ENCODE measurements at regions of chr5 and their contacts with region 1.

Region 1: GRCh38 chr5:96868603-96869371 is 7.5 kb upstream of the ERAP2 start:
- DNase-seq: no peak
- ATAC-seq: peak; percentile 95
- H3K4me3 Mint-ChIP-seq: no peak overlapping the region
- H3K27ac Mint-ChIP-seq: no peak overlapping the region
- H3K4me1 Mint-ChIP-seq: peaks cover 27% of the 10 kb centered on the region
- H3K27me3 Mint-ChIP-seq: no peaks in the 10 kb centered on the region
- CTCF ChIP-seq: peak; percentile 61; the same call in 1 of the 2 replicates

Region 2: DNA sequence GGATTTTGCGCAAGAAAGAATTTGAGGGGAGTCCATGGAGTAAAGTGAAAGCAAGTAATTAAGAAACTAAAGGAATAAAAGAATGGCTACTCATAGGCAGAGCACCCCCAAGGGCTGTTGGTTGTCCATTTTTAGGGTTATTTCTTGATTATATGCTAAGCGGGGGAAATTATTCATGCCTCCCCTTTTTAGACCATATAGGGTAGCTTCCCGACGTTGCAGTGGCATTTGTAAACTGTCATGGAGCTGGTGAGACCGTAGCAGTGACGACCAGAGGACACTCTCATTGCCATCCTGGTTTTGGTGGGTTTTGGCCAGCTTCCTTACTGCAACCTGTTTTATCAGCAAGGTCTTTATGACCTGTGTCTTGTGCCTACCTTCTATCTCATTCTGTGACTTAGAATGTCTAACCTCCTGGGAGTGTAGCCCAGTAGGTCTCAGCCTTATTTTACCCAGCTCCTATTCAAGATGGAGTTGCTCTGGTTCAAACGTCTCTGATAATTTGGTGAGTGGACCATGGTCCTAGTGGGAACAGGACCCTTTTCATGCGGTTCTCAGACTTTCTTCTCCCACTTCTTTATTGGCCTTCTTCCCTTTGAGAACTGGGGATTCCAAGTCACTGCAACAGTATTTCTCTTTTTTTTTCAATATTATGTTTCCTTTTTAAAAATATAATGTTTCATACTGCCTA is 59.8 kb before region 1 on chr5:
- CTCF ChIA-PET with region 1: interaction called, 10 read pairs
- POLR2A ChIA-PET with region 1: no interaction called
- DNase-seq: no peak
- ATAC-seq: no peak
- H3K4me3 Mint-ChIP-seq: peak overlapping the region; percentile 89
- H3K27ac Mint-ChIP-seq: peak overlapping the region; percentile 97
- H3K4me1 Mint-ChIP-seq: peaks cover 26% of the 10 kb centered on the region
- H3K27me3 Mint-ChIP-seq: peaks cover 15% of the 10 kb centered on the region
- CTCF ChIP-seq: no peak

Region 3: GRCh38 chr5:96963267-96963666 is 94.5 kb after region 1 on chr5:
- CTCF ChIA-PET with region 1: no interaction called
- POLR2A ChIA-PET with region 1: no interaction called
- DNase-seq: no peak
- ATAC-seq: no peak
- H3K4me3 Mint-ChIP-seq: no peak overlapping the region
- H3K27ac Mint-ChIP-seq: 0 out of 2 replicates have a peak overlapping the region, but pooled peaks have one; percentile 41
- H3K4me1 Mint-ChIP-seq: peaks cover 5% of the 10 kb centered on the region
- H3K27me3 Mint-ChIP-seq: no peaks in the 10 kb centered on the region
- CTCF ChIP-seq: no peak

Region 4: GRCh38 chr5:96978812-96979449 is 110.1 kb after region 1 on chr5:
- CTCF ChIA-PET with region 1: interaction called, 11 read pairs
- POLR2A ChIA-PET with region 1: no interaction called
- DNase-seq: no peak
- ATAC-seq: no peak
- H3K4me3 Mint-ChIP-seq: no peak overlapping the region
- H3K27ac Mint-ChIP-seq: no peak overlapping the region
- H3K4me1 Mint-ChIP-seq: peaks cover 13% of the 10 kb centered on the region
- H3K27me3 Mint-ChIP-seq: no peaks in the 10 kb centered on the region
- CTCF ChIP-seq: no peak

Region 5: DNA sequence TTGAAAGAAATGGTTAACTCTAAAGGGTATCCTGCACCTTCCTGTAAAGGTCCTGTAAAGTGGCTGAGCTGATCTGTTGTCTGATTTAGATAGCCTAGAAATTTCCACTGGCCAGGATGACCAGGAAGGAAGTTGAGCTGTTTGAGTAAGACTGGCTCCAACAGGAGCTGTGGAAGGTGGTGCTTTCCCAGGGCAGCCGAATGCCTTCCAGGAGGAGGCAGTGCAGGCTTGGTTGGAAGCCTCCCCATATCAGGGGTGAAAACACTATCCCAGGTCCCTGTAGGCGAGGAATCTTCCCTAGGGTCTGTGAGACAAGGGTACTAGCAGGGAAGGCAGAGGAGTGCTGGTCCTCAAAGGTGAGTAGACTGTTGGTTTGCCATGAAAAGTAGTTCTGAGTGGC is 175.3 kb after region 1 on chr5:
- CTCF ChIA-PET with region 1: interaction called, 18 read pairs
- POLR2A ChIA-PET with region 1: no interaction called
- DNase-seq: peak; percentile 76
- ATAC-seq: peak; percentile 97
- H3K4me3 Mint-ChIP-seq: no peak overlapping the region
- H3K27ac Mint-ChIP-seq: no peak overlapping the region; the same call in 1 of the 2 replicates
- H3K4me1 Mint-ChIP-seq: peaks cover 33% of the 10 kb centered on the region
- H3K27me3 Mint-ChIP-seq: no peaks in the 10 kb centered on the region
- CTCF ChIP-seq: peak; percentile 30; the same call in 1 of the 2 replicates

Region 6: DNA sequence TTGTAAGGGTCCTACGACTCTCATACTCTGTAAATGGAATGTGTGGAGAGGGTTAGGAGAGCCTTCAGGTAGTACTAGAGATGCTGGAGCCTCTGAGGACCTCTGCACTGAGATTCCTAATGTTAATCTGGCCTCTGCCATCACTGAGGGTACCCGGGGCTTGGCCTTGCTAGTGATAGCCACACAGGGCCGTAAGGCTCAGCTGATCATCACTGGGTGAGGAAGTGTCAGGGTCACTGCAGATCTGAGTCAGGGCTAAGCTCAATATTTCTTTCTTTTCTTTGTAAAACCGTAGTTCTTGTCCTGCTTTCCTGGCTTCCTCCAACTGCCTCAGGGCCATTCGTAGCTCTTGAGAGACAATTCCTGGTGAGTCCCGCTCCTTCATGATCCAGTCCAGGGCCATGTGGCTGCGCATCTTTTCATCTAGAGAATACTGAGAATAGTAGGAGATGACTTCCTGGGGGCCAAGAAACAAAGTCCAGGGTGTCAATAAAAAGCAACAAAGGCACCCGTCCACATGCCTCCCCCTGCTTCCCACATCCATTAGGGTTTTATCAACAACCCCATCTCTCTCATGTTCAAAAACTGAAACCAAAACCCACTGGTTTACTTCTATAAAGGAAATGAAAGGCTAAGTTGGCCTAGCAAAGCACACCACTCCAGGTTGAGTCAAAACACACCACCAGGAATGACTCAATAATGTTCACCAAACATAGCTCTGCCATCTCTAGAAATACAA is 226.0 kb after region 1 on chr5:
- CTCF ChIA-PET with region 1: no interaction called
- POLR2A ChIA-PET with region 1: no interaction called
- DNase-seq: no peak
- ATAC-seq: no peak
- H3K4me3 Mint-ChIP-seq: no peak overlapping the region
- H3K27ac Mint-ChIP-seq: no peak overlapping the region
- H3K4me1 Mint-ChIP-seq: peaks cover 32% of the 10 kb centered on the region
- H3K27me3 Mint-ChIP-seq: no peaks in the 10 kb centered on the region
- CTCF ChIP-seq: no peak

Region 7: GRCh38 chr5:97148288-97148687 is 279.5 kb after region 1 on chr5:
- CTCF ChIA-PET with region 1: interaction called, 48 read pairs
- POLR2A ChIA-PET with region 1: no interaction called
- DNase-seq: no peak
- ATAC-seq: no peak
- H3K4me3 Mint-ChIP-seq: no peak overlapping the region
- H3K27ac Mint-ChIP-seq: no peak overlapping the region
- H3K4me1 Mint-ChIP-seq: peaks cover 5% of the 10 kb centered on the region
- H3K27me3 Mint-ChIP-seq: no peaks in the 10 kb centered on the region
- CTCF ChIP-seq: no peak

Measured in WTC11 (cell line).